Naive thymus-derived CD4-positive, alpha-beta T cell (primary cell): ENCODE measurements at regions of chr13 and their contacts with region 1.

Region 1: DNA sequence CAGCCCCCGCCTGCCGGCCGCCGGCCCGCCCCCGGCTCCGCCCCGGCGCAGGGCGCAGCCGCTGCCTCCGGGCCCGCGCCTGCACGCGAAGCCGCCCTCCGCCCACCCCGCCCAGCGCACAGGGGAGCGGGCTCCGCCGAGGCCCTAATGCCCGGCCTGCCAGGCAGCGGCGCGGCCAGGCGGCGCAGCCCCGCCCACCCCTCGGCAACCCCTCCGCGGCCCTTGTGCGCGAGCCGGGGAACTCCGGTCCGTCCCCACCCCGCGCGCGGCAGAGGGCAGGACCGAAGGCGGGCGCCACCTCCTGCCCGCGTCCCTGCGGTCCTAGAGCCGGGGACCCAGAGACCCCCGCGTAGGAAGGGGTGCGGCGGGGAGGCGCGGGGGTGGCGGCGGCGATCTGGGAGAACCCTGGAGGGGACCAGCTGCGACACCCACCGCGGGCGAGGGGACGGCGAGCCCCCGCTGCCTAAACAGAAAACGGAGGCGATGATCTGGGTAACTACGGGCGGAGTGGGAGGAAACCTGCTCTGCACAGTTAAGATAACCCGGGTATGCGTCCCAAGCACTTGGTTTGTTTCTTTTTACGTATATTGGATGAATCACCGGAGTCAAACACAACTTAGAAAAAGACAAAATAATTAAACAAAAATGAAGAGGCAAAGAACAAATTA is 350 bp upstream of the USP12 start:
- DNase-seq: peak; percentile 82 to 91 (median 88)
- ATAC-seq: peak; percentile 94
- H3K4me3 ChIP-seq: peak overlapping the region; percentile 58
- H3K4me3 Mint-ChIP-seq: peak overlapping the region; percentile 78 to 96 (median 88)
- H3K27ac ChIP-seq: peak overlapping the region; percentile 85
- H3K27ac Mint-ChIP-seq: peak overlapping the region; percentile 76 to 95 (median 88)
- H3K4me1 ChIP-seq: peaks cover 24 to 34% of the 10 kb centered on the region in 2 donors
- H3K4me1 Mint-ChIP-seq: peaks cover 23 to 49% (median 44%) of the 10 kb centered on the region in 7 donors
- H3K27me3 ChIP-seq: no peaks in the 10 kb centered on the region
- H3K27me3 Mint-ChIP-seq: no peaks in the 10 kb centered on the region

Region 2: GRCh38 chr13:25301347-25302047 is 1870.5 kb before region 1 on chr13 and contains the start of gene NUP58:
- CTCF ChIA-PET with region 1: no interaction called
- POLR2A ChIA-PET with region 1: no interaction called
- intact Hi-C with region 1: loop called in 1 of 2 experiments (anchors 1 kb)
- DNase-seq: peak; percentile 83 to 94 (median 92)
- ATAC-seq: peak; percentile 99
- H3K4me3 ChIP-seq: peak within 1 kb of the TSS; percentile 64
- H3K4me3 Mint-ChIP-seq: peak within 1 kb of the TSS; percentile 86 to 95 (median 92)
- H3K27ac ChIP-seq: peak within 1 kb of the TSS; percentile 93
- H3K27ac Mint-ChIP-seq: peak within 1 kb of the TSS; percentile 87 to 97 (median 93)
- H3K4me1 ChIP-seq: peaks cover 13 to 22% of the 10 kb centered on the region in 2 donors
- H3K4me1 Mint-ChIP-seq: peaks cover 21 to 51% (median 47%) of the 10 kb centered on the region in 7 donors
- H3K27me3 ChIP-seq: peaks cover 0 to 5% of the 10 kb centered on the region in 2 donors
- H3K27me3 Mint-ChIP-seq: peaks cover 7 to 19% (median 10%) of the 10 kb centered on the region in 5 donors
- total RNA-seq, gene NUP58: 41.1 to 89.1 (median 57.0) TPM

Region 3: DNA sequence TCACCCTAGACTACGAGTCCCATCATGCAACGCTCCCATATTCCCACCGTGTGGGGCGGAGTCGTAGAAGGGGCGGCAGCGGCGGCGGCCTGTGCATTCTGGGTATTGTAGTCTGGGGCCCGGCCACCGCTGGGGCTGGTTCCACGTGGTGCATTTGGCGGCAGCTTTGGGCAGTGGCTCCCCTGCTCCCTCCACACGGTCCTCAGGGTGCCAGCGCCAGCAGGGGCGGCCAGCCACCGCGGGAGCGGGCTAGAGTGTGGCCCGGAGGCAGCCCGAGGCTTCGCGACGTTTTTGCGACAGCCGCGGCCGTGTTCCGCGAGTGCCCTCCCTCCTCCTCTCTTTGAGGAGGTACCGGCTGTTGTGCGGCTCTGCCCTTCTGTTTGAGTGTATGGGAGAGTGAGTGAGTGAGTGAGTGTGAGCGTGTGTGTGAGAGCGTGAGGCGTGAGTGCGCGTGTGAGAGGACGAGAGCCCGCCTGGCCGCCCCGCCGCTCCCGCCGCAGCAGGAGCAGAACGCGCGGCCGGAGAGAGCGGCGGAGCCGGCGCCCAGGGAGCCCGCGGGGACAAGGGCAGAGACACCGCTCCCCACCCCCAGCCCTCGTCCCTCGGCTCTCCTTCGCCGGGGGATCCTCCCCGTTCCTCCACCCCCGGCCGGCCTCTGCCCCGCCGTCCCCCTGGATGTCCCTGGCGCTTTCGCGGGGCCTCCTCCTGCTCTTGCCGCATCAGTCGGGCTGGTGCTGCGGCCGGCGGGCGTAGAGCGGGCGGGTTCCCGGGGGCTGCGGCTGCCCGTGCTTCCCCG is 918.0 kb before region 1 on chr13 and contains the start of gene CDK8:
- CTCF ChIA-PET with region 1: no interaction called
- POLR2A ChIA-PET with region 1: no interaction called
- intact Hi-C with region 1: loop called (anchors 5 kb)
- DNase-seq: peak; percentile 83 to 95 (median 93)
- ATAC-seq: peak; percentile 92
- H3K4me3 ChIP-seq: peak within 1 kb of the TSS; percentile 95
- H3K4me3 Mint-ChIP-seq: peak within 1 kb of the TSS; percentile 83 to 98 (median 94)
- H3K27ac ChIP-seq: peak within 1 kb of the TSS; percentile 85
- H3K27ac Mint-ChIP-seq: peak within 1 kb of the TSS; percentile 82 to 93 (median 90)
- H3K4me1 ChIP-seq: peaks cover 17% of the 10 kb centered on the region in 2 donors
- H3K4me1 Mint-ChIP-seq: peaks cover 25 to 50% (median 41%) of the 10 kb centered on the region in 7 donors
- H3K27me3 ChIP-seq: no peaks in the 10 kb centered on the region
- H3K27me3 Mint-ChIP-seq: peaks cover 0 to 2% (median 0%) of the 10 kb centered on the region in 5 donors
- total RNA-seq, gene CDK8: 9.0 to 14.0 (median 11.6) TPM

Region 4: GRCh38 chr13:27097691-27098090 is 74.3 kb before region 1 on chr13:
- CTCF ChIA-PET with region 1: no interaction called
- POLR2A ChIA-PET with region 1: no interaction called
- intact Hi-C with region 1: loop called (anchors 5 to 10 kb)
- DNase-seq: no peak
- ATAC-seq: no peak
- H3K4me3 ChIP-seq: no peak overlapping the region
- H3K4me3 Mint-ChIP-seq: no peak overlapping the region
- H3K27ac ChIP-seq: no peak overlapping the region
- H3K27ac Mint-ChIP-seq: no peak overlapping the region
- H3K4me1 ChIP-seq: no peaks in the 10 kb centered on the region
- H3K4me1 Mint-ChIP-seq: peaks cover 9 to 21% (median 17%) of the 10 kb centered on the region in 7 donors
- H3K27me3 ChIP-seq: no peaks in the 10 kb centered on the region
- H3K27me3 Mint-ChIP-seq: no peaks in the 10 kb centered on the region

Region 5: DNA sequence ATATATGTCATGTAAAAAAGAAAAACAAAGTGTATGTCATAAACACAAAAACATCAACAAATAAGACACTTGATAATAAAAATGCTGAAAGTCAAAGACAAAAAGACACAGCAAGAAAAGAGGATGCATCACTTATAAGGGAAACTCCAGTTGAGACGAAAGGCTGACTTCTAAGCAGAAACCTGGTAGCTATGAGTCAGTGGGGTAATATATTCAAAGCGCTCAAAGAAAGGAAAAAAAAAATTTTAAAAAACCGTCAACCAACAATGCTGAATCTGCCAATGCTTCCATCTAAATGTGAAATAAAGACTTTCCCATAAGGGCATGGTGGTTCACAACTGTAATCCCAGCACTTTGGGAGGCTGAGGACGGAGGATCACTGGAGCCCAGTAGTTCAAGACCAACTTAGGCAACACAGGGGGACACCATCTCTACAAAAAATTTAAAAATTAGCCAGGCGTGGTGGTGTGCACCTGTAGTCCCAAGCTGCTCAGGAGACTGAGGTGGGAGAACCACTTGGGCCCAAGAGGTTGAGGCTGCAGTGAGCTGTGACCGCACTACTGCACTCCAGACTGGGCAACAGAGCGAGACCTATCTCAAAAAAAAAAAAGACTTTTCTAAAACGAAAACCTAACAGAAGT is 24.3 kb before region 1 on chr13:
- CTCF ChIA-PET with region 1: no interaction called
- POLR2A ChIA-PET with region 1: no interaction called
- intact Hi-C with region 1: loop called in 1 of 2 experiments (anchors 2 kb)
- DNase-seq: peak in 1 of 9 donors; percentile 26
- ATAC-seq: peak; percentile 71
- H3K4me3 ChIP-seq: no peak overlapping the region
- H3K4me3 Mint-ChIP-seq: peak overlapping the region in 6 of 10 donors; percentile 3 to 43 (median 22)
- H3K27ac ChIP-seq: no peak overlapping the region
- H3K27ac Mint-ChIP-seq: peak overlapping the region in 5 of 9 donors; percentile 10 to 67 (median 67)
- H3K4me1 ChIP-seq: peaks cover 0 to 10% of the 10 kb centered on the region in 2 donors
- H3K4me1 Mint-ChIP-seq: peaks cover 35 to 80% (median 71%) of the 10 kb centered on the region in 7 donors
- H3K27me3 ChIP-seq: no peaks in the 10 kb centered on the region
- H3K27me3 Mint-ChIP-seq: no peaks in the 10 kb centered on the region

Region 6: GRCh38 chr13:27362064-27362883 is 190.3 kb after region 1 on chr13:
- CTCF ChIA-PET with region 1: no interaction called
- POLR2A ChIA-PET with region 1: no interaction called
- intact Hi-C with region 1: loop called (anchors 1 to 10 kb)
- DNase-seq: peak; percentile 51 to 82 (median 66)
- ATAC-seq: peak; percentile 95
- H3K4me3 ChIP-seq: peak overlapping the region; percentile 47
- H3K4me3 Mint-ChIP-seq: peak overlapping the region; percentile 24 to 83 (median 45)
- H3K27ac ChIP-seq: no peak overlapping the region
- H3K27ac Mint-ChIP-seq: peak overlapping the region in 1 of 9 donors; percentile 35
- H3K4me1 ChIP-seq: peaks cover 0 to 4% of the 10 kb centered on the region in 2 donors
- H3K4me1 Mint-ChIP-seq: peaks cover 0 to 9% (median 5%) of the 10 kb centered on the region in 7 donors
- H3K27me3 ChIP-seq: peaks cover 0 to 7% of the 10 kb centered on the region in 2 donors
- H3K27me3 Mint-ChIP-seq: peaks cover 13 to 50% (median 25%) of the 10 kb centered on the region in 5 donors

Region 7: GRCh38 chr13:28658796-28659620 is 1487.0 kb after region 1 on chr13 and contains the start of gene POMP:
- CTCF ChIA-PET with region 1: no interaction called
- POLR2A ChIA-PET with region 1: no interaction called
- intact Hi-C with region 1: loop called in 1 of 2 experiments (anchors 2 kb)
- DNase-seq: peak; percentile 83 to 96 (median 93)
- ATAC-seq: peak; percentile 95
- H3K4me3 ChIP-seq: peak within 1 kb of the TSS; percentile 86
- H3K4me3 Mint-ChIP-seq: peak within 1 kb of the TSS; percentile 88 to 100 (median 98)
- H3K27ac ChIP-seq: peak within 1 kb of the TSS; percentile 96
- H3K27ac Mint-ChIP-seq: peak within 1 kb of the TSS; percentile 94 to 99 (median 99)
- H3K4me1 ChIP-seq: peaks cover 25 to 29% of the 10 kb centered on the region in 2 donors
- H3K4me1 Mint-ChIP-seq: peaks cover 38 to 84% (median 69%) of the 10 kb centered on the region in 7 donors
- H3K27me3 ChIP-seq: no peaks in the 10 kb centered on the region
- H3K27me3 Mint-ChIP-seq: no peaks in the 10 kb centered on the region
- total RNA-seq, gene POMP: 18.8 to 97.0 (median 21.2) TPM